ENCODE measurements at regions of chr19 and their contacts with region 1.

Region 1: GRCh38 chr19:2507109-2507508 is 31.2 kb downstream of the GADD45B start:
- DNase-seq: peak in 11 of 14 experiments; percentile 12 to 74 (median 45)
- ATAC-seq: peak; percentile 59
- H3K4me3 ChIP-seq: no peak overlapping the region
- H3K4me3 Mint-ChIP-seq: no peak overlapping the region
- H3K27ac ChIP-seq: no peak overlapping the region
- H3K27ac Mint-ChIP-seq: peak overlapping the region; percentile 80
- H3K4me1 ChIP-seq: peaks cover 32% of the 10 kb centered on the region
- H3K4me1 Mint-ChIP-seq: peaks cover 21% of the 10 kb centered on the region
- H3K27me3 ChIP-seq: no peaks in the 10 kb centered on the region
- H3K27me3 Mint-ChIP-seq: no peaks in the 10 kb centered on the region
- CTCF ChIP-seq: no peak

Region 2: GRCh38 chr19:2529473-2529918 is 22.4 kb after region 1 on chr19:
- CTCF ChIA-PET with region 1: no interaction called
- POLR2A ChIA-PET with region 1: no interaction called
- intact Hi-C with region 1: no loop called
- DNase-seq: no peak
- ATAC-seq: no peak
- H3K4me3 ChIP-seq: no peak overlapping the region
- H3K4me3 Mint-ChIP-seq: no peak overlapping the region
- H3K27ac ChIP-seq: no peak overlapping the region
- H3K27ac Mint-ChIP-seq: no peak overlapping the region
- H3K4me1 ChIP-seq: peaks cover 6% of the 10 kb centered on the region
- H3K4me1 Mint-ChIP-seq: peaks cover 13% of the 10 kb centered on the region
- H3K27me3 ChIP-seq: no peaks in the 10 kb centered on the region
- H3K27me3 Mint-ChIP-seq: no peaks in the 10 kb centered on the region
- CTCF ChIP-seq: no peak

Region 3: GRCh38 chr19:2552859-2553258 is 45.8 kb after region 1 on chr19:
- CTCF ChIA-PET with region 1: no interaction called
- POLR2A ChIA-PET with region 1: interaction called, 3 read pairs
- intact Hi-C with region 1: loop called in 1 of 2 experiments (anchors 5 kb)
- DNase-seq: peak in 12 of 14 experiments; percentile 12 to 90 (median 37)
- ATAC-seq: peak; percentile 92
- H3K4me3 ChIP-seq: peak overlapping the region; percentile 19
- H3K4me3 Mint-ChIP-seq: peak overlapping the region; percentile 85
- H3K27ac ChIP-seq: peak overlapping the region; percentile 21 to 26
- H3K27ac Mint-ChIP-seq: peak overlapping the region; percentile 62
- H3K4me1 ChIP-seq: peaks cover 23% of the 10 kb centered on the region
- H3K4me1 Mint-ChIP-seq: peaks cover 13% of the 10 kb centered on the region
- H3K27me3 ChIP-seq: no peaks in the 10 kb centered on the region
- H3K27me3 Mint-ChIP-seq: no peaks in the 10 kb centered on the region
- CTCF ChIP-seq: no peak